Activated CD4-positive, alpha-beta T cell treated with anti-CD3 and anti-CD28 coated beads, Interleukin-2, amount 10 ng/mL, durations not matched to agents 24 days and 14 days (primary cell): ENCODE measurements at regions of chr19 and their contacts with region 1.

Region 1: GRCh38 chr19:8444645-8445487 is at the start of gene HNRNPM:
- DNase-seq: peak; percentile 100
- H3K4me3 Mint-ChIP-seq: peak within 1 kb of the TSS; percentile 96
- H3K27ac Mint-ChIP-seq: peak within 1 kb of the TSS; percentile 99
- H3K4me1 Mint-ChIP-seq: peaks cover 25% of the 10 kb centered on the region
- H3K27me3 Mint-ChIP-seq: no peaks in the 10 kb centered on the region
- total RNA-seq, gene HNRNPM: 349 and 352 TPM in 2 replicates

Region 2: DNA sequence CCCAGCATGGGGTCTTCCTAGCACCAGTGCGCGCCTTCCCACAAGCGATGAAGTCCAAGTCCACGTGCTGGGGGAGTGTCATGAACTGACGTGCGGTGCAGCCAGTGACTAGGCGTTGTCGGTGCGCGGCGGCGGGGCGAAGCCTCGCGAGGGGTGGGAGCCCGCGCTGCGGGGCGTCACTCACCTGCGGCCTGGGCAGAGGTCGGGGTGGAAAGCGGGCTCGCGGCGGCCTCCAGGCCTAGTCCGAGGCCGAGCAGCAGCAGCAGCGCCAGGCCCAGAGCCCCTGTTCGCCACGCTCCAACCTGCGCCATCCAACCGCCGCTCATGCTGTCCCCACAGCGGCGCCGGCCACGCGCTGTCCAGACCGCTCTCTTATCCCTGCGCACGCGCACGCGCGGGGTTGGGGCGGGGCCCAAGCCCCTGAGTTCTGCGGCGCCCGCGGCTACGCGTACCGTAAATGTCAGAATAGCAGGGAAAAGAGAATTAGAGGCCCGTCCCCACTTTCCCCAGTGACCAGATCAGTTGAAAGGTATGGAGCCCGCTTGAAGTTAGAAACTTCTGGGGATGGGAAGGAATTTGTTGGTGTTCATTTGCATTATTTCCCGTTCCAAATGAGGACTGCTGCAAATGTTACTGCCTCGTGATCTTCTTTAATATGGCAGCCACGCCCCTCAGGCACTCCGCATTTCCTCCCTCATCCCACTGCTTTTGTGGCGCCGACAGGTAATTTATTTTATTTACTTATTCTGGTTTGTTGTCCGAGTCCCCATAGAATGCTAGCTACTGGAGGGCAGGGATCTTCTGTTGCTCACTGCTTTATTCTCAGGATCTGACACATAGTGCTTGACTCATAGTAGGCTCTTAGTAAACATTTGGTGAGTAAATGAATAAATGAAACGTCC is 136.7 kb before region 1 on chr19 and contains the start of gene CD320:
- intact Hi-C with region 1: no loop called
- DNase-seq: peak; percentile 97
- H3K4me3 Mint-ChIP-seq: peak within 1 kb of the TSS; percentile 98
- H3K27ac Mint-ChIP-seq: peak within 1 kb of the TSS; percentile 93
- H3K4me1 Mint-ChIP-seq: peaks cover 31% of the 10 kb centered on the region
- H3K27me3 Mint-ChIP-seq: no peaks in the 10 kb centered on the region
- total RNA-seq, gene CD320: 110 and 113 TPM in 2 replicates

Region 3: GRCh38 chr19:8377598-8377997 is 67.3 kb before region 1 on chr19:
- intact Hi-C with region 1: no loop called
- DNase-seq: no peak
- H3K4me3 Mint-ChIP-seq: no peak overlapping the region
- H3K27ac Mint-ChIP-seq: no peak overlapping the region
- H3K4me1 Mint-ChIP-seq: peaks cover 5% of the 10 kb centered on the region
- H3K27me3 Mint-ChIP-seq: no peaks in the 10 kb centered on the region

Region 4: DNA sequence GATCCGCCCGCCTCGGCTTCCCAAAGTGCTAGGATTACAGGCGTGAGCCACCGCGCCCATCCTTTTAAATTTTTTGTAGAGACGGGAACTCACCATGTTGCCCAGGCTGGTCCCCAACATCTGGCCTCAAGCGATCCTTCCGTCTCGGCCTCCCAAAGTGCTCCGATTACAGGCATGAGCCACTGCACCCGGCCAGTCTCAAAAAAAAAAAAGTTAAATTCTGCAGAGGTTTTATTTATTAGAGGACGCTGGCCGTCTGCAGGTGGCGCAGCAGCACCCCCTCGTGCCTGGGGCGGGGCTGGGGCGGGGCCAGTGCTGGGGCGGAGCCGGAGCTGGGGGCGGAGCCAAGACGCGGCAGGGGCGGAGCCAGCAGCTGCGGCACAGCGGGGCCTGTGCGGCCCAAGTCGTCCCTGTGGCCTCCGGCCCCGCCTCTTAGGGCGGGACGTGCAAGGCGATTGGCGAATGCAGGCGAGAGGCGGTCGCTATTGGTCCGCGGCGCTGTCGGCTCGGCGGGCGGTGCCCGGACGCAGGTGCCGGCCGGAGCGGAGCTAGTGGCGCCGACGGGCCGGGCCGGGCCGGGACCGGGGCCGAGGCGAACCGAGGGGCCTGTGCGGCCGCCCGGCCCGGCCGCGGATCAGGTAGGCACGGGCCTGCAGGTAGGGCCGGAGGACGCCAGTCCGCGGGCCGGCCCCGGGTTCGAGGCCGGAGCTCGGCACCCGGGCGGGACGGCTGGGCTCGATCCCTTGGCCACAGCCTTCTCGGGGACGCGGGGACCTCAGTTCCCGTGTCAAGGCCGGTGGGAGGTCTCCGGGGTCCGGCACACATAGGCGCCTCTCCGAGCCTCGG is 31.9 kb before region 1 on chr19 and contains the start of gene MARCHF2:
- intact Hi-C with region 1: loop called (anchors 1 kb)
- DNase-seq: peak; percentile 99
- H3K4me3 Mint-ChIP-seq: peak within 1 kb of the TSS; percentile 52
- H3K27ac Mint-ChIP-seq: peak within 1 kb of the TSS; percentile 29
- H3K4me1 Mint-ChIP-seq: peaks cover 8% of the 10 kb centered on the region
- H3K27me3 Mint-ChIP-seq: no peaks in the 10 kb centered on the region
- total RNA-seq, gene MARCHF2: 7.9 and 8.8 TPM in 2 replicates

Region 5: GRCh38 chr19:8459520-8460259 is 14.8 kb after region 1 on chr19:
- intact Hi-C with region 1: no loop called
- DNase-seq: no peak
- H3K4me3 Mint-ChIP-seq: no peak overlapping the region
- H3K27ac Mint-ChIP-seq: no peak overlapping the region
- H3K4me1 Mint-ChIP-seq: peaks cover 44% of the 10 kb centered on the region
- H3K27me3 Mint-ChIP-seq: no peaks in the 10 kb centered on the region

Region 6: DNA sequence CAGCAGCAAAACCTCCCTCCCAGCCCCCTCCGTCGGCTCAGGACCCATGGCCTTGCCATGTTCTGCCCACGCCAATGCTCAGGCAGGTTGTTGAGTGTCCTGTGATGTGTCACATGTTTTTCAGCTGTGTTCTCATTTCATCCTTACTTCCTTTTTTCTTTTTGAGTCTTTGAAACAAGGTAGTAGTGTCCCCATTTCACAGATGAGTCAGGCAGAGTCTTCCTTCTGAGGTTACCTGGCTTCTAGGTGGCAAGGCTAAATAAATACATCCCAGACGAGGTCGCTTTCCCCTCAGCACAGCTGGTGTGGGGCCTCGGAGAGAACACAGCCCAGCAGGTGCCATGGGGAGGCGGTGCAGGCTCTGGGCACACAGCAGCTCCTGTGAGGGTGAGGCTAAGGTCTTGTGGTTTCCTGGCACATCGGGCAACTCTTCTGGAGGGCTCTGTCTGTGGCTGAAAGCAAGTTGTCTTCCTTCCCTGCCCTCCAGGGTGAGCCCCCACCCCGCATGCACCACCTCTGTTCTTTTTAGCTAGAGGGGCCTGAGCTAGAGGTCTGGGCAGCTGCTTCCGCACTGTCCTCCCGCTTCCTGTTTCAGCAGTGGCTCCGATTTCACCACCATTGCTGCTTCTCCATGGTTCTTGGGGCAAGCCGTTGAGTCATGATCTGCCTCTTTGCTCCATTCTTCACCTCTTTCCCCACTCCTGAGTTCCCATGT is 42.4 kb after region 1 on chr19:
- intact Hi-C with region 1: no loop called
- DNase-seq: peak; percentile 81
- H3K4me3 Mint-ChIP-seq: peak overlapping the region; percentile 68
- H3K27ac Mint-ChIP-seq: peak overlapping the region; percentile 95
- H3K4me1 Mint-ChIP-seq: peaks cover 28% of the 10 kb centered on the region
- H3K27me3 Mint-ChIP-seq: no peaks in the 10 kb centered on the region